T-cell (primary cell): ENCODE measurements at regions of chr7 and their contacts with region 1.

Region 1: GRCh38 chr7:44999245-45000095 is 531 bp upstream of the CCM2 start:
- DNase-seq: peak; percentile 96 to 99 (median 98)
- ATAC-seq: peak; percentile 84 to 89 (median 86)
- H3K4me3 ChIP-seq: peak overlapping the region; percentile 60 to 79
- H3K4me3 Mint-ChIP-seq: peak overlapping the region; percentile 85 to 97 (median 95)
- H3K27ac ChIP-seq: peak overlapping the region; percentile 50
- H3K27ac Mint-ChIP-seq: peak overlapping the region; percentile 95 to 99
- H3K4me1 ChIP-seq: peaks cover 20 to 46% of the 10 kb centered on the region in 2 experiments
- H3K4me1 Mint-ChIP-seq: peaks cover 53 to 60% (median 54%) of the 10 kb centered on the region in 3 donors
- H3K27me3 ChIP-seq: no peaks in the 10 kb centered on the region
- H3K27me3 Mint-ChIP-seq: no peaks in the 10 kb centered on the region

Region 2: DNA sequence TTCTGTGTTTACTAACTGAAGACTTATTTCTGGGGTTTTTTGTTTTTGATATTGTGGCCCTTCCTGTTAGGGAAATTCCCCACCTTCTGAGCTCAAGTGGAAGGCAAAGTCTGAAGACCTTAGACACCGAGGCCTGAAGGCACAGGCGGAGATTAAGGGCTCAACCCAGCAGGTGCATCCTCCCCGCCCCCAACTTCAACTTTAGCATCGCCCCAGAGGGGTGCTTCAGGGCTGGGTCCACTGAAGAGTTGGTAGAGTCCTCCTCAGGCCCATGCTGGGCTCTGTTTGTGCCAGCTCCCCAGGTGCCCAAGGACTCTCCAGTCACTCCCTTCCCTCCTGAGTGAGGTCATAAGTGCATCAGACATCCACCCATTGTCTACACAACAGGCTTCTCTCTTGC is 212.4 kb before region 1 on chr7:
- CTCF ChIA-PET with region 1: no interaction called
- POLR2A ChIA-PET with region 1: no interaction called
- DNase-seq: no peak
- ATAC-seq: peak in 1 of 4 experiments; percentile 35
- H3K4me3 ChIP-seq: no peak overlapping the region
- H3K4me3 Mint-ChIP-seq: no peak overlapping the region
- H3K27ac ChIP-seq: no peak overlapping the region
- H3K27ac Mint-ChIP-seq: no peak overlapping the region
- H3K4me1 ChIP-seq: peaks cover 0 to 3% of the 10 kb centered on the region in 2 experiments
- H3K4me1 Mint-ChIP-seq: no peaks in the 10 kb centered on the region
- H3K27me3 ChIP-seq: no peaks in the 10 kb centered on the region
- H3K27me3 Mint-ChIP-seq: no peaks in the 10 kb centered on the region

Region 3: DNA sequence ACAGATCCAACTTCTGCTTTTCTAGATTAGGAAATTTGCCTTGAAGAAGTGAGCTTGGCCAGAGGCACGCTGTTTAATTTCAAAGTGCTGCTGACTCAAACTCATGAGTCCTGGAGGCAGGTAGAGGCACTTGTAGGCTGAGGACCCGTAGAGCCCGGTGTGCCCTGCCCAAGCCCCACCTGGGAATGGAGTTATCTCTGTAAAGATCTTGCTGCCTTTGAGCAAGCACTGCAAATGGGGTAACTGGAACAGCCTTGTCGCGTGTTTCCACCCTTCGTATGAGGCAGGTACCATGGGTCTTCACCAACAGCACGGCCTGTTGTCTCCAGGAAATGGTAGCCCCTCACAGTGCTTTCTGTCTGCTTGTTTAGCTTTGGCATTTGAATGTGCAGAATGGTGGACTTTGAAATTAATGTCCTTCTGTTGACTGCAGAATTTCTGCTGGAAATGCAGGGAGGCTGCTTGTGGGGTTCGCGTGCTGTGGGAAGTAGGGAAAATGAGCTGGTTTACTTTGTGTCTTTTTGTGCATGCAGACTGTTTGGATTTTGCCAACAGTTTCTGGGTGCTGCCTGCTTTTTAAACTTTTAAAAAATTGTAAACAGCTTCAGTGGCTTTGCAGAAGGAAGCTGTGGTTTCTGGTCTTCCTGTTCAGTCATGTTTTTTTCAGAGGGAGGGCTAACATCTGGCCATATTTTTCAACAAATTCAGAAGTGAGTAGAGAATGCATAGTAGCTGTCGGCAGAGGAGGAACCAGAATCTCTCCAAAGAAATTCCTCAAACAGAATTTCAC is 27.7 kb after region 1 on chr7:
- CTCF ChIA-PET with region 1: interaction called, 5 to 12 read pairs
- POLR2A ChIA-PET with region 1: interaction called, 6 to 8 read pairs
- DNase-seq: peak in 29 of 35 experiments; percentile 4 to 67 (median 23)
- ATAC-seq: peak; percentile 69 to 79 (median 76)
- H3K4me3 ChIP-seq: peak overlapping the region; percentile 89 to 96
- H3K4me3 Mint-ChIP-seq: peak overlapping the region; percentile 84 to 91 (median 90)
- H3K27ac ChIP-seq: peak overlapping the region; percentile 71
- H3K27ac Mint-ChIP-seq: peak overlapping the region; percentile 88 to 93
- H3K4me1 ChIP-seq: peaks cover 35 to 57% of the 10 kb centered on the region in 2 experiments
- H3K4me1 Mint-ChIP-seq: peaks cover 60 to 77% (median 67%) of the 10 kb centered on the region in 3 donors
- H3K27me3 ChIP-seq: no peaks in the 10 kb centered on the region
- H3K27me3 Mint-ChIP-seq: no peaks in the 10 kb centered on the region

Region 4: DNA sequence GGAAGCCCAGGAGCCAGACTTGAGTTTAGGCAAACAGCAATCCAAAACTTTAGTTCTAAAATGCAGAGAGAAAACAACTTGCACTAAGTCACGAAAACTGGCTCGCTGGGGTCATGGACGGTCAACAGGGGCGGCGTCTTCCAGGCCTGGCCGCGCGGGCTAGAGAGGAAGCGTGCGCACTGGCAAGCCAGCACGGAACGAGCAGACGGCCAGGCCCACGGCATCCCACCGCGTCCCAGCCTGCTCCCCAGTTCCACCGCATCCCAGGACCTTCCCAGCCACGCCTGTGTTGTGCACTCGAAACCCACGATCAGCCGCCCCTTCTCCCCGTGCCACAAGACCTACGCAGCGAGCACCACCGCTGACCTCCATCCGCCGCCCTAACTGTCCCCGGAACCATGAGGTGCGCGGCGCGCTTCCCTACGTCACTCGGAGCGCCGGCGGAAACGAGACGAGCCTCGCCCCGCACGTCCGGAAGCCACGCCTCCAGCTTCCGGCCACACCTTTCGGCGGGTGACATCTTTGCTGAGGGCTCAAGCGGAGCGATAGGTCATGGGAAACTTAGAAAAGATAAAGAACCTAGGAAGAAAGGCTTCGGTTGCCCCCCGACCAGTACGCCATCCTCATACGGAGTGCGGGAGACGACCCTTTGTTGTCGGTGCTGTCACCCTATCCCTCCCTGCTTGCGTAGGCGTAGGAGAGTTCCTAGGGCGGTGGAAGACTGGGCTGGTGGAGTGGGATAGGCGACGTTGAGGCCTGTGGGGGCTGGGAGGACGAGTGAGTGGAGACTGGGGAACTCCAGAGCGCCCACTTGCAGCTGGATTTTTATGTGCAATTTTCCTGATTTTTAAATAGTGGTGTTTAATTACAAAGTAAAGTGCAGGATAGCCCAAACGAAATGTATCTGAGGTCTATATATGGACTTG is 112.1 kb after region 1 on chr7 and contains the start of gene TBRG4:
- CTCF ChIA-PET with region 1: no interaction called
- POLR2A ChIA-PET with region 1: interaction called in 1 of 2 experiments, 13 read pairs
- DNase-seq: peak; percentile 86 to 98 (median 93)
- ATAC-seq: peak; percentile 85 to 95 (median 94)
- H3K4me3 ChIP-seq: peak within 1 kb of the TSS; percentile 71 to 85
- H3K4me3 Mint-ChIP-seq: peak within 1 kb of the TSS; percentile 88 to 94 (median 93)
- H3K27ac ChIP-seq: peak within 1 kb of the TSS; percentile 91
- H3K27ac Mint-ChIP-seq: peak within 1 kb of the TSS; percentile 96 to 97
- H3K4me1 ChIP-seq: peaks cover 30 to 53% of the 10 kb centered on the region in 2 experiments
- H3K4me1 Mint-ChIP-seq: peaks cover 46 to 51% (median 51%) of the 10 kb centered on the region in 3 donors
- H3K27me3 ChIP-seq: no peaks in the 10 kb centered on the region
- H3K27me3 Mint-ChIP-seq: peaks cover 4 to 5% of the 10 kb centered on the region in 2 donors
- total RNA-seq, gene TBRG4: 94.3 to 142 (median 122) TPM